ENCODE measurements at regions of chr9 and their contacts with region 1.

Region 1: GRCh38 chr9:89513837-89514236 is 15.9 kb upstream of the SEMA4D start:
- DNase-seq: no peak
- H3K4me3 ChIP-seq: no peak overlapping the region
- H3K27ac ChIP-seq: no peak overlapping the region
- H3K4me1 ChIP-seq: no peaks in the 10 kb centered on the region
- H3K27me3 ChIP-seq: no peaks in the 10 kb centered on the region
- CTCF ChIP-seq: no peak

Region 2: GRCh38 chr9:89448381-89448780 is 65.5 kb before region 1 on chr9:
- CTCF ChIA-PET with region 1: no interaction called
- dilution Hi-C with region 1: loop called (anchors 5 kb)
- in situ Hi-C with region 1: no loop called
- intact Hi-C with region 1: no loop called
- DNase-seq: no peak
- H3K4me3 ChIP-seq: no peak overlapping the region
- H3K27ac ChIP-seq: no peak overlapping the region
- H3K4me1 ChIP-seq: no peaks in the 10 kb centered on the region
- H3K27me3 ChIP-seq: no peaks in the 10 kb centered on the region
- CTCF ChIP-seq: no peak

Region 3: GRCh38 chr9:89878687-89879086 is 364.9 kb after region 1 on chr9:
- CTCF ChIA-PET with region 1: no interaction called
- dilution Hi-C with region 1: no loop called
- in situ Hi-C with region 1: no loop called
- intact Hi-C with region 1: no loop called
- DNase-seq: no peak
- H3K4me3 ChIP-seq: no peak overlapping the region
- H3K27ac ChIP-seq: no peak overlapping the region
- H3K4me1 ChIP-seq: no peaks in the 10 kb centered on the region
- H3K27me3 ChIP-seq: no peaks in the 10 kb centered on the region
- CTCF ChIP-seq: no peak

Measured in mammary epithelial cell (primary cell).